Aorta (tissue), 5 donors: ENCODE measurements at regions of chr12 and their contacts with region 1.

Region 1: GRCh38 chr12:66087365-66087943 is 43.1 kb downstream of the LLPH start:
- DNase-seq: peak; percentile 75 to 80
- ATAC-seq: peak; percentile 73
- H3K4me3 ChIP-seq: no peak overlapping the region
- H3K27ac ChIP-seq: no peak overlapping the region
- H3K4me1 ChIP-seq: no peaks in the 10 kb centered on the region
- H3K27me3 ChIP-seq: no peaks in the 10 kb centered on the region

Region 2: GRCh38 chr12:65556681-65557437 is 530.6 kb before region 1 on chr12:
- intact Hi-C with region 1: loop called (anchors 2 to 5 kb)
- DNase-seq: peak; percentile 80 to 93
- ATAC-seq: peak; percentile 94
- H3K4me3 ChIP-seq: no peak overlapping the region
- H3K27ac ChIP-seq: no peak overlapping the region
- H3K4me1 ChIP-seq: no peaks in the 10 kb centered on the region
- H3K27me3 ChIP-seq: no peaks in the 10 kb centered on the region

Region 3: GRCh38 chr12:65602610-65603295 is 484.7 kb before region 1 on chr12:
- intact Hi-C with region 1: loop called in 1 of 2 experiments (anchors 5 kb)
- DNase-seq: peak; percentile 84 to 89
- ATAC-seq: peak; percentile 93
- H3K4me3 ChIP-seq: no peak overlapping the region
- H3K27ac ChIP-seq: no peak overlapping the region
- H3K4me1 ChIP-seq: peaks cover 3 to 4% of the 10 kb centered on the region in 2 donors
- H3K27me3 ChIP-seq: no peaks in the 10 kb centered on the region

Region 4: GRCh38 chr12:65685514-65685913 is 401.9 kb before region 1 on chr12:
- intact Hi-C with region 1: loop called in 1 of 2 experiments (anchors 10 kb)
- DNase-seq: no peak
- ATAC-seq: no peak
- H3K4me3 ChIP-seq: no peak overlapping the region
- H3K27ac ChIP-seq: no peak overlapping the region
- H3K4me1 ChIP-seq: no peaks in the 10 kb centered on the region
- H3K27me3 ChIP-seq: no peaks in the 10 kb centered on the region

Region 5: DNA sequence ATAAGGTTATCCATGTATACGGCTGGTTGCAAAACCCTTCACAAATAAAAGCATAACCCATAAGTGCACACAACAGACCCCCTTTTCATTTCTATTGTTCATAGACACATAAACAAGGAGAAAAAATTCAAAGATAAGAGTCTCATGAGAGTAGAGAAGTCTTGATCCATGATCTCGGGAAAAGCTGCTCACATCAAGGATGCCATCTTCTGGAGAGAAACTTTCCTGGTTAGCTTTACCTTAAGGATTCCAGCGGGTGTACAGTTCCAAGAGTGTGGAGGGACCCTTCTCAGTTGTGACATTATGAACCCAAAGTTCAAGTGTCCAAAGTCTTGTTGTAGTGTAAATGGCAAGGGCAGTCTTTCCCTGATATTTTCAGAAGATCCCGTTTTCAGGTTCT is 101.4 kb before region 1 on chr12:
- intact Hi-C with region 1: loop called (anchors 10 kb)
- DNase-seq: no peak
- ATAC-seq: no peak
- H3K4me3 ChIP-seq: no peak overlapping the region
- H3K27ac ChIP-seq: no peak overlapping the region
- H3K4me1 ChIP-seq: no peaks in the 10 kb centered on the region
- H3K27me3 ChIP-seq: no peaks in the 10 kb centered on the region

Region 6: GRCh38 chr12:66119870-66120241 is 32.4 kb after region 1 on chr12:
- intact Hi-C with region 1: no loop called
- DNase-seq: no peak
- ATAC-seq: no peak
- H3K4me3 ChIP-seq: no peak overlapping the region
- H3K27ac ChIP-seq: no peak overlapping the region
- H3K4me1 ChIP-seq: peaks cover 0 to 3% of the 10 kb centered on the region in 2 donors
- H3K27me3 ChIP-seq: no peaks in the 10 kb centered on the region